Activated CD4-positive, alpha-beta T cell treated with anti-CD3 and anti-CD28 coated beads, Interleukin-2, amount 10 ng/mL, durations not matched to agents 24 days and 14 days (primary cell): ENCODE measurements at regions of chr19 and their contacts with region 1.

Region 1: DNA sequence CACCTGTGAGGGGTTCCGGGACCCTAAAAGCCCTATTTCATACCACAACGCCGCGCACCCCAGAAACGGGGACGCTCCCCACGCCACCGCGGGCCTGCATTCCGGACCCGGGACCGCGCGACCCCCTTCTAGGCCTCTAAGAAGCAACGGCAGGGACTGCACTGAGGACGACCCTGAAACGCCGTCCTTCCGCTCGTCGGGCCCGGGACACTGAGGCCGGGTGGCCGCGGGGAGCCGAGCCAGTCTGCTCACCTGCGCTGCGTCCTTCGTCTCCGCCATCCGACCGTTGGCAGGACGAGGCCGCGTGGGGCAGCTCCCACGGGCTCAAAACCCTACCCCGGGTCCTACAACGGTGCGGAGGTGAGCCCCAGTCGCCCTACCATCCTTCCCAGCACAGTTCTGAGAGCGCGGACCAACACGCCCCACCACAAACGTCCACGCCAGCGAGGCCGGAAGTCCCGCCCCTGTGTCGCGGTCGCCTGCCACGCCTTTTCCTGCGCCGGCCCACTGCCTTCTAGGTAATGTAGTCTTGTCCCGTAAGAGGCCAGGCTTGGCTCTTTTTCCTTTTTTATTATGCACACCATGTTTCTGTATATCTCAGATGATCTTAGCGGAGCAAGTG is at the start of gene ZNF550:
- DNase-seq: peak; percentile 96
- H3K4me3 Mint-ChIP-seq: peak within 1 kb of the TSS; percentile 99
- H3K27ac Mint-ChIP-seq: peak within 1 kb of the TSS; percentile 94
- H3K4me1 Mint-ChIP-seq: peaks cover 23% of the 10 kb centered on the region
- H3K27me3 Mint-ChIP-seq: no peaks in the 10 kb centered on the region
- total RNA-seq, gene ZNF550: 7.4 and 9.3 TPM in 2 replicates

Region 2: DNA sequence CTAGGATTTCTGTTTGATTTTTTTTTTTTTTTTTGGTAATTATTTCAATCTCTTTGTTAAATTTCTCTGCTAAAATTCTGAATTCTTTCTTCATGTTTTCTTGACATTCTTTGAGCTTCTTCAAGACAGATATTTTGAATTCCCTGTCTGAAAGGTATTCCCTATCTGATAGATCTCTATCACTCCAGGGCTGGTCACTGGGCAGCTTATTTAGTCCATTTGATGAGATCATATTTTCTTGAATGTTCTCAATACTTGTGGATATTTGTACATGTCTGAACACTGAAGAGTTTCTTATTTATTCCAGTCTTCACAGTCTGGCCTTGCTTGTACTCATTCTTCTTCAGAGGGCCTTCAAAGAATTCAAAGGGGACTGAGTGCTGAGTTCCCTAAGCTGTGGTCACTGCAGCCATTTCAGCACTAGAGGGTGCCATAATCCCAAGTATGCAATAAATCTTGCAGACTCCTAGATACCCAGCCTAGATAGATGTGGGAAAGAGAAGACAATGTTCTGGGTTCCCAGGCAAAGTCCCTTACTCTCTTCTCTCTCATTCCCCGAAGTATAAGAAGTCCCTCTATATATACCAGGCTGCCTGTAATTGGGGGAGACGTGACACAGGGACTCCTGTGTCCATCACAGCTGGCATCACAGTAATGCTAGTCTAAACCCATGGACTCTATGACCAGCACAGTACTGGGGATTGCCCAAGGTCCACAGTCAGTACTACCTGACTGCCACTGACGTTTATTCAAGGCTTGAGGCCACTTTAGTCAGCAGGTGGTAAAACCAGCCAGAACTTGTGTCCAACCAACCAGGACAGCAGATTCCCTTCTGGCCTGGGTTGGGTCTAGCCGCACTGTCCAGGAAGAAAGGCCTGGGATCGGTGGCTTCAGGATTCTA is 93.8 kb before region 1 on chr19:
- intact Hi-C with region 1: no loop called
- DNase-seq: peak; percentile 80
- H3K4me3 Mint-ChIP-seq: no peak overlapping the region
- H3K27ac Mint-ChIP-seq: no peak overlapping the region
- H3K4me1 Mint-ChIP-seq: no peaks in the 10 kb centered on the region
- H3K27me3 Mint-ChIP-seq: no peaks in the 10 kb centered on the region

Region 3: DNA sequence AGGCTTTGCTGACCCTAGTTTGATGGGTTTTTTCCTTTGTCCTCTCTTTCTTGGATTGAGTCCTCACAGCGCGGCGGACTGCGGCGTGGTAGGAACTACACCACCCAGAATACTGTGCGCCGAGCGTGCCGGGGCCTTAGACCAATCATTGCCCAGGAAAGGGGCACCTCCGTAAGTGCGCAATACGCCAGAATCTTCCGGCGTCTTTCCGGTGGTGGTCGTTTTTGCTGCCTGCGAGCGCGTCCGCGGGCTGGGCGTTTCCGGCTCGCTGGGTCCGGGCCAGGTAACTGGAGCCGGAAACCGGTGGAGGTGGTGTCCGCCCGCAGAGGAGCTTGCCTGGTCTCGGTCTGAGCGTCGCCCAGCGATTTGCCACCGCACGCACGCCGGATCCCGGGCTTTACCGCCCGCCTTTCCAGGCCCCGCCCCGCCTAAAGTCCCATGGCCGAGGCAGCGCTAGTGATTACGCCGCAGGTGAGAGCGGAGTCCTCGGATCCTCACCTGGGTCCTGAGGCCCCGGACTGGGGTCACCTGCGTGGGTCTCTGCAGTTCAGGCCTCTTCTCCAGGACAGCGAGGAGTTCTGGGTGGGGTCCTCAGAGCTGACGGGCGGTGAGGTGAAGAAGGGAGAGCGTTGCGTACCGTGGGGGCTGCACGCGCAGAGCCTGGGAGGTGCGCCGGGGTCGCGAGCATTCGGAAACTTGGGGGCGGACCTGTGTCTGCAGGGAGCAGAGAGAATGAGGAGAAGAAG is 32.2 kb before region 1 on chr19 and contains the start of gene ZNF549:
- intact Hi-C with region 1: loop called (anchors 1 kb)
- DNase-seq: peak; percentile 96
- H3K4me3 Mint-ChIP-seq: peak within 1 kb of the TSS; percentile 99
- H3K27ac Mint-ChIP-seq: peak within 1 kb of the TSS; percentile 57
- H3K4me1 Mint-ChIP-seq: peaks cover 14% of the 10 kb centered on the region
- H3K27me3 Mint-ChIP-seq: no peaks in the 10 kb centered on the region
- total RNA-seq, gene ZNF549: 4.0 and 4.9 TPM in 2 replicates

Region 4: GRCh38 chr19:57664269-57665127 is 105.0 kb after region 1 on chr19:
- intact Hi-C with region 1: no loop called
- DNase-seq: peak; percentile 59
- H3K4me3 Mint-ChIP-seq: peak overlapping the region; percentile 87
- H3K27ac Mint-ChIP-seq: no peak overlapping the region
- H3K4me1 Mint-ChIP-seq: peaks cover 3% of the 10 kb centered on the region
- H3K27me3 Mint-ChIP-seq: peaks cover 8% of the 10 kb centered on the region